PC-3 (cell line): ENCODE measurements at regions of chr4 and their contacts with region 1.

Region 1: DNA sequence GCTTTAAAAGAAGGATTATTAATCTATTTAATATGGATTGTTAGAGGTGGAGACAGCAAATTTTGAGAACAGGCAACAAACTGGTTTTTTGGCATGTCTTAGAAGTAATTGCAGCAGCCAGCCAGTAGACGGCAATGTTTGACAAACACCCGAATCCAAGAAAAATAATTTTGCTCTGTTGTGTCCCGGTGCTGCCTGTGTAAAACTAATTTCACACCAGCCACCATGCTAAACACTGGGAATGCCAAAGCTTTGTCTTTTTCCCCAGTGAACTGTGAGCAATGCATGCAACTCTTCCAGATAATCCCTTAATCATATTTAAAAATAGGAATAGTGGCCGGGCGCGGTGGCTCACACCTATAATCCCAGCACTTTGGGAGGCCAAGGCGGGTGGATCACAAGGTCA is 25.9 kb downstream of the SMIM31 start:
- DNase-seq: peak; percentile 48
- ATAC-seq: no peak
- H3K4me3 ChIP-seq: no peak overlapping the region
- H3K27ac ChIP-seq: no peak overlapping the region
- H3K4me1 ChIP-seq: no peaks in the 10 kb centered on the region
- H3K27me3 ChIP-seq: no peaks in the 10 kb centered on the region
- CTCF ChIP-seq: peak; percentile 70

Region 2: DNA sequence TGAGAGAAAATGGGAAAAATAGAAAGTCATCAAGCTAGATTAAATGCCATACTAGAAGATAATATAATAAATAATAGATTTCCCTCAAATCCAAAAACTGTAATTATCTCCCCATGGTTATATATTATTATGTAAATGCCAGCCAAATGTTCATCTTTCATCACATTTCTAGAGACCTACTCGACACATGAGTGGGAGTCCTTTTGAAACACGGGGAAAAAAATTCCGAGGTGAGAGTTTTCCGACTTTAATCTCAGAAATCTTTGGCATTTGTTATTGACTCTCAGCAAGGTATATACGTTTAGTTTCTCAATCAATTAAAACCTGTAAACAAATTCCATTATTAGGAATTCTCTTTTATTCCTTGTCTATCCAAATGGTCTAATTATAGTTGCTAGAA is 491.2 kb before region 1 on chr4:
- CTCF ChIA-PET with region 1: no interaction called
- POLR2A ChIA-PET with region 1: no interaction called
- intact Hi-C with region 1: no loop called
- DNase-seq: no peak
- ATAC-seq: no peak
- H3K4me3 ChIP-seq: no peak overlapping the region
- H3K27ac ChIP-seq: no peak overlapping the region
- H3K4me1 ChIP-seq: no peaks in the 10 kb centered on the region
- H3K27me3 ChIP-seq: no peaks in the 10 kb centered on the region
- CTCF ChIP-seq: no peak

Region 3: GRCh38 chr4:164368894-164369293 is 410.9 kb before region 1 on chr4:
- CTCF ChIA-PET with region 1: no interaction called
- POLR2A ChIA-PET with region 1: no interaction called
- intact Hi-C with region 1: no loop called
- DNase-seq: no peak
- ATAC-seq: no peak
- H3K4me3 ChIP-seq: no peak overlapping the region
- H3K27ac ChIP-seq: no peak overlapping the region
- H3K4me1 ChIP-seq: no peaks in the 10 kb centered on the region
- H3K27me3 ChIP-seq: no peaks in the 10 kb centered on the region
- CTCF ChIP-seq: no peak

Region 4: DNA sequence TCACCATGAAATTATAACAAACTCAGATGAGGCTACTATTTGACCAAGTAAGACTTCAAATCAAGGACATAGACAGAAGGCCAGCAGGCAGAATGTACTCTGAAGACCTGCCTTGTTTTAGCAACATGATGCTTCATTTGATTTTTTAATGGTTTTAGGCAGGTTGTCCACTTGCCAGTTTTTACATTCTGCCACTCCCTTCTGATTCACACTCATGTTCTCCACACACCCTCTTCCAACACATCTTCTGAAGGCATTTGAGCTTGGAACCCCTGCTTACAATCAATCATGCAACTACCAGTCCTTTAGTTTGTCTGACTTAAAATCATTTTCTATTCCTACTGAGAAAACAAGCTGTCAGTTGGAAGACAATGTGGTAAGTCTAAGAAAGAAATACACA is 140.8 kb before region 1 on chr4:
- CTCF ChIA-PET with region 1: no interaction called
- POLR2A ChIA-PET with region 1: no interaction called
- intact Hi-C with region 1: no loop called
- DNase-seq: peak; percentile 20
- ATAC-seq: peak; percentile 38; the same call in 1 of the 2 replicates
- H3K4me3 ChIP-seq: no peak overlapping the region
- H3K27ac ChIP-seq: no peak overlapping the region
- H3K4me1 ChIP-seq: peaks cover 22% of the 10 kb centered on the region
- H3K27me3 ChIP-seq: no peaks in the 10 kb centered on the region
- CTCF ChIP-seq: no peak

Region 5: DNA sequence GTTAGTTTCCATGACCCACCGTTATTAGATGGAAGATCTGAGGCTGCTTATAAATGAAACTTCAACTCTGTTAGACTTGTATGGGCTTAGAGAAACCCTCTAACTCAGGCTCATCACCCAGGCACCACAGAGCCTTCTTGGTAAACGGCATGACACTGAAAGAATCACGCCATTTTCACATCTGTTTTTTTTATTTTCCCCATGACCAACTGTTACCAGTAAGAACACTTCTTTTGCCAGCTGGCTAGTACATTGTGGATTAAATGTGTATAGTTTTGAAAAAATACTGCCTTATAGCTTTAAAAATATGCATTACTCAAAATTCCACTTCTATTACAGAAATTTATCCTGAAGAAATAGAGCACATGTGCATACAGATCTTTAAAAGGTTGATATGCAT is 49.1 kb after region 1 on chr4:
- CTCF ChIA-PET with region 1: no interaction called
- POLR2A ChIA-PET with region 1: no interaction called
- intact Hi-C with region 1: no loop called
- DNase-seq: no peak
- ATAC-seq: no peak
- H3K4me3 ChIP-seq: no peak overlapping the region
- H3K27ac ChIP-seq: no peak overlapping the region
- H3K4me1 ChIP-seq: no peaks in the 10 kb centered on the region
- H3K27me3 ChIP-seq: 0 out of 2 replicates have a peak, but pooled peaks cover 2% of the 10 kb centered on the region
- CTCF ChIP-seq: no peak

Region 6: DNA sequence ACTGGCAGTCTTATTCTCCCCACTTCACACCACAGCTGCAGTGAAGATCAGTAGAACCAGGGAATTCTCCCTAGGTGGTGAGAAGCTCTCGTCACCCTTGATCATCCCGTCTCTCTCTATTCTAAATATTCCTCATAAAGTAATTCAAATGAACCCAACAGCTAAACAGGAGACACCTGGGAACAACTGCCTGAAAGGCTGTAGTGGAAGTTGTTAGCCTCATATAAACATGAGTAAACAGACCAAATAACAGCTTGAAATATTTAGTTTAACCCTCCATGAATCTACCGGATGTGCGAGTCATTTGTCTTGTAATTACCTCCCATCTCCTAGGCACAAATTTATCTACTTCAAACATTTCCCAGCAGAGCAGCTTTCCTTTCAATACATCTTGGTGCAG is 66.8 kb after region 1 on chr4:
- CTCF ChIA-PET with region 1: no interaction called
- POLR2A ChIA-PET with region 1: no interaction called
- intact Hi-C with region 1: loop called (anchors 1 kb)
- DNase-seq: no peak
- ATAC-seq: no peak
- H3K4me3 ChIP-seq: no peak overlapping the region
- H3K27ac ChIP-seq: no peak overlapping the region
- H3K4me1 ChIP-seq: no peaks in the 10 kb centered on the region
- H3K27me3 ChIP-seq: no peaks in the 10 kb centered on the region
- CTCF ChIP-seq: no peak

Region 7: DNA sequence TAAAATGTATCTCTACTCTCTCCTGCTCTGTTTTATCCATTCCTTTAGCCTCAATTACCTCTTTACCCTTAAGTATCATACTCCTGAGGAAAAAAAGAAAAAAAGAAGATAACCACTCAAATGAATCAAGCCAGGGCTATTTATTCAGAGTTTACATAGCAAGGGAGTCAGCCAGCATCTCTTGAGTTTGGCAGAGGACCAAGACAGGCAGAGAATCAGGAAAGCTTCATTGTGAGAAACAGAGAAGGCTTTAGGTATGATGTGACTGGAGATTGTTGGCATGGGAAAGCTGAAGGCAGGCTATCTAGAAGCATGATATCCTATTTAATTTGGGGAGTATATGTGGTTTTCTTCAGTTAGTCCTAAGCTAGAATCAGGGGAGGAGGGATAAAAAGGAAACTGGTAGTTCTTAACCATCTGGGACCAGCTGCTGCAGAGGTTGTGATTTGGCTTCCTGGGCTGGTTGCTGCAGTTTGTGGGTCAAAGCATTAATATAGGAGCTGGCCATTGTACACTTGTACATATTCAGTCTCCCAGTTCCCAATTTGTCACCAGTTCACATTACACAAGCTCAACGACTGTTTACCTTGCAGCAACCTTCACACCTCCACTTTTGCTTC is 108.4 kb after region 1 on chr4:
- CTCF ChIA-PET with region 1: no interaction called
- POLR2A ChIA-PET with region 1: no interaction called
- intact Hi-C with region 1: loop called (anchors 10 kb)
- DNase-seq: peak; percentile 14
- ATAC-seq: no peak
- H3K4me3 ChIP-seq: no peak overlapping the region
- H3K27ac ChIP-seq: no peak overlapping the region
- H3K4me1 ChIP-seq: no peaks in the 10 kb centered on the region
- H3K27me3 ChIP-seq: peaks cover 31% of the 10 kb centered on the region
- CTCF ChIP-seq: no peak

Region 8: DNA sequence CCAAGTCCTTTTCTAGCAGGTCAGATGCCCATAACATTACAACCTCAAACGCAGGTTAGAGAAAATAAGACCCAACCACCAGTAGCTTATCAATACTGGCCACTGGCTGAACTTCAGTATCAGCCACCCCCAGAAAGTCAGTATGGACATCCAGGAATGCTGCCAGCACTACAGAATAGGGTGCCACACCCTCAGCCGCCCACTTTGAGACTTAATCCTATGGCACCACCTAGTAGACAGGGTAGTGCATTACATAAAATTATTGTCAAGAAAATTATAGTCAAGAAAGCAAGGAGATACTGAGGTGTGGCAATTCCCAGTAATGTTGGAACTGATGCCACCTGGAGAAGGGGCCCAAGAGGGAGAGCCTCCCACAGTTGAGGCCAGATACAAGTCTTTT is 217.5 kb after region 1 on chr4:
- CTCF ChIA-PET with region 1: no interaction called
- POLR2A ChIA-PET with region 1: no interaction called
- intact Hi-C with region 1: loop called (anchors 5 kb)
- DNase-seq: peak; percentile 54
- ATAC-seq: 0 out of 2 replicates have a peak, but pooled peaks have one; percentile 24
- H3K4me3 ChIP-seq: no peak overlapping the region
- H3K27ac ChIP-seq: no peak overlapping the region
- H3K4me1 ChIP-seq: no peaks in the 10 kb centered on the region
- H3K27me3 ChIP-seq: peaks cover 9% of the 10 kb centered on the region
- CTCF ChIP-seq: peak; percentile 59